Gastrocnemius medialis (tissue), 4 donors: ENCODE measurements at regions of chr14 and their contacts with region 1.

Region 1: DNA sequence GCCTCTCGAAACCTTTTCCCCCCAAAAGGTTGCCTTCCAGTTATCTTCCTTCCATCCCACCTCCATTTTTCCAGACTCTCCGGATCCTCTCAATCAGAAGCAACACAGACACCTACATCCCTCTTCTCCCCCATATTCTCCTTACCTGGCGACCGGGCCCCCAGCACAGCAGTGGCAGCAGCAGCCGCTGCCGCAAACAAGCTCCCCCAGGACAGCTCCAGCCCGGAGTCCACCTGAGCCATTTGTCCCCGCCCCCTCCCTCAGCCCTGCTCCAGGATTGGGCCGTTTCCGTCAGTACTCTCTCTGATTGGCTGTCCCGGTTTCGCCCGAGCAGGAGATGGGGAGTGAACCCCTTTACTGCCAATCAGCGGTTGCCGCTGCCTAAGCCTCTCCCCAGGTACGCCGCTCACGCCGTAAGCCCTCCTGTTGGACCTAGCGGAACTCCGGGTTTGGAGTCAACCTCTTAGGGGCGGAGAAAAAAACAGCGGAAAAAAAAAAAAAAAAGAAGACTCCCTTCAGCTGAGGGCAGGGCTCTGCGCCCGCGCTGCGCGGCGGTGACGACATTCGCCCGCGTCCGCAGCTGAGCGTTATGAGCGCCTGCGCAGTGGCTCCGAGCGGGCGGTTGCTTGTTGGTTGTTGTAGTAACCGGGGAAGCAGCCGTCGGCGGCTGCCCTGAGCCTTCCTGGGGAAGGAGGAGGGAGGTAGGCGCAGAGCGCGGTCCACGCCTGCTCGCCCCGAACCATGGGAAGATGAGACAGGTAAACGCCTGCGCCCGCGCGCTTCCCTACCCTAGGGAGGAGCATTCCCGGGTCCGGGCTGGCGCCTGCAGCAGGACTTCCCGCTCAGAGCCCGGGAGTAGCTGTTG is at the starts of genes ERG28 and TTLL5:
- DNase-seq: peak; percentile 98
- ATAC-seq: peak; percentile 97 to 98
- H3K4me3 ChIP-seq: peak within 1 kb of the TSS; percentile 72 to 98 (median 85)
- H3K27ac ChIP-seq: peak within 1 kb of the TSS; percentile 77 to 86 (median 82)
- H3K4me1 ChIP-seq: peaks cover 27 to 47% of the 10 kb centered on the region in 2 donors
- H3K27me3 ChIP-seq: no peaks in the 10 kb centered on the region
- CTCF ChIP-seq: no peak
- POLR2A ChIP-seq: peak; percentile 54 to 85
- total RNA-seq, gene ERG28: 3.7 to 6.4 (median 4.7) TPM
- total RNA-seq, gene TTLL5: 9.1 to 36.0 (median 16.4) TPM

Region 2: GRCh38 chr14:75619548-75619947 is 41.3 kb before region 1 on chr14:
- in situ Hi-C with region 1: no loop called
- intact Hi-C with region 1: no loop called
- DNase-seq: no peak
- ATAC-seq: no peak
- H3K4me3 ChIP-seq: no peak overlapping the region
- H3K27ac ChIP-seq: no peak overlapping the region
- H3K4me1 ChIP-seq: peaks cover 0 to 12% of the 10 kb centered on the region in 2 donors
- H3K27me3 ChIP-seq: no peaks in the 10 kb centered on the region
- CTCF ChIP-seq: no peak
- POLR2A ChIP-seq: no peak

Region 3: DNA sequence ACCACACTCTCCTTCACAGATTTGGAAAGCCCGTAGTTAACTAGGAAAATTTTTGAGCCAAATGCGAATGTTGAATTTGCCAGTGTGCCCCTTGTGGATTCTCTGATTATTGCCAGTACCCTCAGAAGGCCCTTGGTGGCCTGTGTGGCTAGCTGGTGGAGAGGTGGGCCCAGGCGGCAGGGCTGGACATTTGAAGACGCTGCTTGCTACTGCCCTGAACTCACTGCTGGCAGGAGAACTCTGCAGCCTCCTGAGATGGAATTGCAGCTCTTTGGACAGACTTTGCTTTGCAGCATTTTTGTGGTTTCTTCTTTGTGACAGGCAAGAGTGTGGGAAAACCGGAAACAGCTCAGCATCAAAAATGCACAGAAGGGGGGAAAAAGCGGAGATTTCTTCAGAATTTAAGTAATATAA is 223.3 kb after region 1 on chr14:
- in situ Hi-C with region 1: no loop called
- intact Hi-C with region 1: no loop called
- DNase-seq: no peak
- ATAC-seq: no peak
- H3K4me3 ChIP-seq: no peak overlapping the region
- H3K27ac ChIP-seq: no peak overlapping the region
- H3K4me1 ChIP-seq: peaks cover 0 to 5% of the 10 kb centered on the region in 2 donors
- H3K27me3 ChIP-seq: no peaks in the 10 kb centered on the region
- CTCF ChIP-seq: no peak
- POLR2A ChIP-seq: no peak

Region 4: GRCh38 chr14:76083796-76084765 is 423.2 kb after region 1 on chr14:
- in situ Hi-C with region 1: no loop called
- intact Hi-C with region 1: no loop called
- DNase-seq: no peak
- ATAC-seq: no peak
- H3K4me3 ChIP-seq: no peak overlapping the region
- H3K27ac ChIP-seq: peak overlapping the region in 2 of 4 donors; percentile 75 to 82
- H3K4me1 ChIP-seq: peaks cover 50 to 67% of the 10 kb centered on the region in 2 donors
- H3K27me3 ChIP-seq: no peaks in the 10 kb centered on the region
- CTCF ChIP-seq: no peak
- POLR2A ChIP-seq: no peak

Region 5: DNA sequence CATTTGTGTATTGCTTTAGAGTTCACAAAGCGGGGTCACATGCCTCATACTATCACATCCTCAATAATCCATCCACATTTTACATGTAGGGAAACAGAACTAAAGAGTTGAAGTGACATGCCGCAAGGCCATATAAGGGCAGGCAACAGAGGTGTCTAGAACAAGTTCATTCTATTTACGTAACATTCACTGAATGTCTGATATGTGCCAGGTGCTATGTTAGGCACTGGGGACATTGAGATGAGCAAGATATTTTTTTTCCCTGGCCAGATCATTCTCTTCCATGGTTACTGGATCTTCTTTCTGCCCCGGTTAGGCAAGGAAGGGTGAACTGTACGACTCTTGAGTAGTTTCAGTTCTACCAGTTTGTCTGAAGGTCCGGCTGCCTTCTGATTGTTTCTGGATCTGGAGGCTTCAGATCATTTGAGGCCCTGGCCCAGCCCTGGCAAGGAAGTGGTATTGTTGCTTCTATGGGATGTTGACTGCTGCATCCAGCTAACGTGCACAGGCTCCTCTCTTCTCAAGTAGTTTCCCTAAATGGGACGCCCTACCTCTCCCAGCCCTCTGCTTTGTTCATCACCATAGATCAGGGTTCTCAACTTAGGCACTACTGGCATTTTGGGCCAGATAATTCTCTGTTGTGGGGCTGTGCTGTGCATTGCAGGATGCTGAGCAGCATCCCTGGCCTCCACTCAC is 503.0 kb after region 1 on chr14:
- in situ Hi-C with region 1: no loop called
- intact Hi-C with region 1: loop called (anchors 5 kb)
- DNase-seq: peak; percentile 38 to 55
- ATAC-seq: peak; percentile 92 to 97
- H3K4me3 ChIP-seq: peak overlapping the region; percentile 5 to 43 (median 34)
- H3K27ac ChIP-seq: peak overlapping the region; percentile 73 to 84 (median 78)
- H3K4me1 ChIP-seq: peaks cover 61 to 65% of the 10 kb centered on the region in 2 donors
- H3K27me3 ChIP-seq: no peaks in the 10 kb centered on the region
- CTCF ChIP-seq: no peak
- POLR2A ChIP-seq: no peak